ENCODE measurements at regions of chr1 and their contacts with region 1.

Region 1: GRCh38 chr1:151594143-151594625 is 17.7 kb upstream of the SNX27 start:
- DNase-seq: peak; percentile 95
- ATAC-seq: peak; percentile 97
- H3K4me3 Mint-ChIP-seq: peak overlapping the region; percentile 86
- H3K27ac Mint-ChIP-seq: peak overlapping the region; percentile 89
- H3K4me1 Mint-ChIP-seq: peaks cover 10% of the 10 kb centered on the region
- H3K27me3 Mint-ChIP-seq: peaks cover 7% of the 10 kb centered on the region
- CTCF ChIP-seq: peak; percentile 79

Region 2: DNA sequence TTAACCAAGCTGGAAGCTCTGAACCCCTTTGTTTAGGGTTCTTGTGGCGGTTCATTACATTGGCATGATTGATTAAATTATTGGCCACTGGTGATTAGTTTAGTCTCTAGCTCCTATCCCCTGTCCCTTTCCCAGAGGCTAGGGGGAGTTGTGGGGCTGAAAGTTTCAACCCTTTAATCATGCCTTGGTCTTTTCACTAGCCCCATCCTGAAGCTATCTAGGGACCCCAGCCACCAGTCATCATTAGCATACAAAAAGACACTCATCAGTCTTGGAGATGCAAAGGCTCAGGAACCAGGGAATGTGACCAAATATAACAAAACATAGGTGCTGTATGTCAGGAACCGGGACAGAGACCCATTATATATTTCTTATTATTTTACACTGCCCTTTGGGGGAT is 17.0 kb before region 1 on chr1:
- CTCF ChIA-PET with region 1: interaction called, 11 read pairs
- POLR2A ChIA-PET with region 1: no interaction called
- DNase-seq: peak; percentile 18
- ATAC-seq: peak; percentile 90
- H3K4me3 Mint-ChIP-seq: no peak overlapping the region
- H3K27ac Mint-ChIP-seq: peak overlapping the region; percentile 3; the same call in 1 of the 2 replicates
- H3K4me1 Mint-ChIP-seq: peaks cover 11% of the 10 kb centered on the region
- H3K27me3 Mint-ChIP-seq: no peaks in the 10 kb centered on the region
- CTCF ChIP-seq: no peak

Region 3: DNA sequence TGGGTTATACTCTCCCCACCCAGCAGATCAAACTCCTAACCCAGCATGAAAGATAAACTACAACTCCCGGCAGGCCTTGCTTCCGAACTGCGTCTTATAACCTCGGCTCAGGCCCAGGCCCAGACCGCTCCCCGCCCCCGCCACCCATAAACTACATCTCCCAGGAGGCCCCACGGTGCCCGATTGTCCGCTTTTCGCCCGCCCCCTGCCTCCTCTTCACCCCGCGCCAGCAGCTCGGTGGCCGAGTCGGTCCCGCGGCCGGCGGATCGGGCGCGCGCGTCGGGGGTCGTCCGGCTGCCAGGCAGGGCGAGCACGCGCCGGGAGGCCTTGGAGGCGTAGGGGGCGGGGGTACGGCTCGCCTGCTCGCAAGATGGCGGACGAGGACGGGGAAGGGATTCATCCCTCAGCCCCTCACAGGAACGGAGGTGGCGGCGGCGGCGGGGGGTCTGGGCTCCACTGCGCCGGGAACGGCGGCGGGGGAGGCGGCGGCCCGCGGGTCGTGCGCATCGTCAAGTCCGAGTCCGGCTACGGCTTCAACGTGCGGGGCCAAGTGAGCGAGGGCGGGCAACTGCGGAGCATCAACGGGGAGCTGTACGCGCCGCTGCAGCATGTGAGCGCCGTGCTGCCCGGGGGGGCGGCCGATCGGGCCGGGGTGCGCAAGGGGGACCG is 17.8 kb after region 1 on chr1 and contains the start of gene SNX27:
- CTCF ChIA-PET with region 1: interaction called, 21 read pairs
- POLR2A ChIA-PET with region 1: no interaction called
- DNase-seq: peak; percentile 96
- ATAC-seq: peak; percentile 92
- H3K4me3 Mint-ChIP-seq: peak within 1 kb of the TSS; percentile 93
- H3K27ac Mint-ChIP-seq: peak within 1 kb of the TSS; percentile 83
- H3K4me1 Mint-ChIP-seq: peaks cover 22% of the 10 kb centered on the region
- H3K27me3 Mint-ChIP-seq: peaks cover 3% of the 10 kb centered on the region; the same call in 1 of the 2 replicates
- CTCF ChIP-seq: no peak
- total RNA-seq, gene SNX27: 50.0 to 56.0 TPM (median 50.3 TPM) in 3 replicates

Region 4: GRCh38 chr1:151644001-151644400 is 49.8 kb after region 1 on chr1:
- CTCF ChIA-PET with region 1: no interaction called
- POLR2A ChIA-PET with region 1: no interaction called
- DNase-seq: no peak
- ATAC-seq: no peak
- H3K4me3 Mint-ChIP-seq: no peak overlapping the region
- H3K27ac Mint-ChIP-seq: no peak overlapping the region
- H3K4me1 Mint-ChIP-seq: no peaks in the 10 kb centered on the region
- H3K27me3 Mint-ChIP-seq: no peaks in the 10 kb centered on the region
- CTCF ChIP-seq: no peak

Region 5: GRCh38 chr1:151693076-151693651 is 99.0 kb after region 1 on chr1:
- CTCF ChIA-PET with region 1: interaction called, 20 read pairs
- POLR2A ChIA-PET with region 1: no interaction called
- DNase-seq: no peak
- ATAC-seq: peak; percentile 73; the same call in 1 of the 2 replicates
- H3K4me3 Mint-ChIP-seq: no peak overlapping the region
- H3K27ac Mint-ChIP-seq: no peak overlapping the region
- H3K4me1 Mint-ChIP-seq: no peaks in the 10 kb centered on the region
- H3K27me3 Mint-ChIP-seq: no peaks in the 10 kb centered on the region
- CTCF ChIP-seq: no peak

Region 6: DNA sequence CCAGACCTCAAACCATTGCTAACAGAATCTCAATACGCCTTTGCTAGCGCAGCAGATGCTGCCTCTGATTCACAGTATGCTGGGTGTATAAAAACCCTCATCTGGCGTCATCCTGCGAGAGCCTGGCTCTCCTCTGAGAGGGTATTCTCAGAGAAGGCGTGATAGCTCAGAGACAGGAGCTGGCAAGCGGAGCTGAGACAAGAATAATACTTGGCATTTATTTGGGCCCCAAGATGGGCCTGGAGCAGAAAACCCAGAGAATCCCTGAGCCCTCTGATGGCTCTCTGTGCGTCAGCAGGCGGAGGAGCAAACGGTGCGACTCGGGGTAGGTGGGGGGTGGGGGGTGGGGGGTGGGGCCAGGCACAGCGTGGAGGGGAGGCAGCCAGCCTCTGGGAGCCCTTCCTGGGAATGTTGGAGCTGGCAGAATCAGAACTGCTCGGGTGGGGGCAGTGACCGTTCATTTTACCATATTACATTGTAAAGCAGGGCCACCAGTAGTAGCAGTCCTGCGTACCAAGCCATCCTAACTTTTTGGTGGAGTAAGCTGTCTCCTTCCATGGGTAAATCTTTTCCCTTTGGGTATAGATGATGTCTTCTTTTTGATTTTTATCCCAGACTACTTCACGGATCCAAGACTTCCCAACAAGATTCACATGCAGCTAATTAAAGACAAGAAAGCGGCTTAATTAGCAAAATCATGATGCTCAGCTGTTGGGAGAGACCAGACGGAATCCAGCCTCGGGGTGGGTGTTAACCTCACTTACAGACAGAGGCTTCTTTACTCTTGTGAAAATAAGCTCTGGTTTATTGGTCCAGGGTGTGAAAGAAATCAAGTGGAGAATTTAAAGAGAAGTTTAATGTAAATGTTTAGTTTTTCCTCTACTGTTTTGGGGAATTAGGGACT is 134.2 kb after region 1 on chr1:
- CTCF ChIA-PET with region 1: interaction called, 22 read pairs
- POLR2A ChIA-PET with region 1: no interaction called
- DNase-seq: no peak
- ATAC-seq: peak; percentile 75
- H3K4me3 Mint-ChIP-seq: peak overlapping the region; percentile 37
- H3K27ac Mint-ChIP-seq: no peak overlapping the region
- H3K4me1 Mint-ChIP-seq: peaks cover 32% of the 10 kb centered on the region
- H3K27me3 Mint-ChIP-seq: peaks cover 22% of the 10 kb centered on the region
- CTCF ChIP-seq: no peak